Testis (tissue), 5 donors: ENCODE measurements at regions of chr6 and their contacts with region 1.

Region 1: GRCh38 chr6:125314019-125314581 is 12.3 kb upstream of the HDDC2 start:
- DNase-seq: peak; percentile 80
- H3K4me3 ChIP-seq: no peak overlapping the region
- H3K27ac ChIP-seq: no peak overlapping the region
- H3K4me1 ChIP-seq: no peaks in the 10 kb centered on the region
- H3K27me3 ChIP-seq: no peaks in the 10 kb centered on the region
- CTCF ChIP-seq: peak; percentile 71 to 82 (median 81)
- POLR2A ChIP-seq: no peak

Region 2: DNA sequence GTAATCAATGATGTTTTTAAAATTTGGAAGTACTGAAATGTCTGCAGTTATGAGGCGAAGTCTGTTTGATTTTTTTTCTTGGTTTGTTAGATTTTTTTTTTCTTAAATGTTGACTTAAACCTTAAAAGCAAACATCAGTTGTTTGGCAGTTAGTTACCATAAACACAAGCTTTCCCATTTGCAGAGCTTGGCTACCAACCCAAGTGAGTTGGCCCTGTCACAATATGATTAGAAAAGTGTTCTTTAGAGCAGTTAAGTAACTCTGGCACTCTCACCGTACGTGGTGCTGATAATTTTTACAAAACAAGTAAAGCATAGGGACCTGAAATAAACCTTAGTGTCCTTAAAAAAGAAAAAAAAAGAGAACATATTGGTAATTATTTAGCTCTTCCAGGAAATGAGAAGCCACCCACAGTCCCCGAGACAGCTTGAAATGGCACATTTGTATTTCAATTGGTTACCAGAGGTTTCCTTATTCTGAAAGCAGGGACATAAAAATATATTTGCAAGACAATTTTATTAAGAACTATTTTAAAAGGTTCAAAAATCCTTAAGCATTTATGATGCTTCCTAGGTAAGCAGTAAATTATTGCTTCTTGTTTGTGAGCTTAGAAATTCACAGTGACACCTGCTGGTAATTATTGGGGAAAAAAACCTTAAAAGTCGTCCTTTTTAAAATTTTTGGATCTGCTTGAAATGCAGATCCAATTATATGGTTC is 439.3 kb after region 1 on chr6:
- intact Hi-C with region 1: loop called (anchors 5 kb)
- DNase-seq: peak; percentile 31
- H3K4me3 ChIP-seq: no peak overlapping the region
- H3K27ac ChIP-seq: peak overlapping the region in 1 of 2 donors; percentile 39
- H3K4me1 ChIP-seq: no peaks in the 10 kb centered on the region
- H3K27me3 ChIP-seq: no peaks in the 10 kb centered on the region
- CTCF ChIP-seq: peak in 2 of 3 experiments; percentile 41 to 42
- POLR2A ChIP-seq: no peak

Region 3: GRCh38 chr6:125765944-125766343 is 451.8 kb after region 1 on chr6:
- intact Hi-C with region 1: loop called (anchors 5 kb)
- DNase-seq: no peak
- H3K4me3 ChIP-seq: no peak overlapping the region
- H3K27ac ChIP-seq: no peak overlapping the region
- H3K4me1 ChIP-seq: no peaks in the 10 kb centered on the region
- H3K27me3 ChIP-seq: no peaks in the 10 kb centered on the region
- CTCF ChIP-seq: no peak
- POLR2A ChIP-seq: no peak

Region 4: DNA sequence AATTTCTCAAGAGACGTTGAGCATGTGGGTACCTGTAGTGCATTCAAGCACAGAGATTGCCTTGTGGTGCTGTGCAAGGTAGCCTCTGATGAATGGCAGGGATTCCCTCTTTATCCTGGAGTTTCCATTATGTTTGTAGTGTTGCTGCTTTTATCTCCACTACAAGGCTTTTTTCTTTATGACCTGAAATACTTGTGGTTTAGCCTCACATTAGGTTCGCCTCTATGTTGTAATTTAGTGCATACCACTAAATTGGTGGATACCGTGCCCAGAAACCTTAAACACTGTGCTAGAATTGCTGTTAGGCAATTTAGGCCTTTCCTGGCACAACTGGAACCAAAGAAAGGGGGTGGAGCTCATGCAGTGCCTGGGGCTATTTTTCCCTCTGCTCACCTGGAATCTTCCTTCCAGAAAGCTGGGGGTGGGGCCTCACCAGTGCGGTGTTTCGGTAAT is 553.4 kb after region 1 on chr6:
- intact Hi-C with region 1: no loop called
- DNase-seq: no peak
- H3K4me3 ChIP-seq: no peak overlapping the region
- H3K27ac ChIP-seq: no peak overlapping the region
- H3K4me1 ChIP-seq: no peaks in the 10 kb centered on the region
- H3K27me3 ChIP-seq: no peaks in the 10 kb centered on the region
- CTCF ChIP-seq: no peak
- POLR2A ChIP-seq: no peak